SK-N-SH (cell line): ENCODE measurements at regions of chr7 and their contacts with region 1.

Region 1: GRCh38 chr7:76262683-76263402 is 39.6 kb upstream of the HSPB1 start:
- DNase-seq: peak; percentile 88
- H3K4me3 ChIP-seq: no peak overlapping the region; a peak in 1 of 4 replicates
- H3K27ac ChIP-seq: no peak overlapping the region
- H3K4me1 ChIP-seq: peaks cover 0 to 4% of the 10 kb centered on the region in 2 experiments; a peak in 1 of 4 replicates
- H3K27me3 ChIP-seq: no peaks in the 10 kb centered on the region
- CTCF ChIP-seq: peak; percentile 95
- EP300 ChIP-seq: no peak
- RAD21 ChIP-seq: peak; percentile 99

Region 2: GRCh38 chr7:76166404-76167255 is 96.2 kb before region 1 on chr7:
- CTCF ChIA-PET with region 1: interaction called, 18 read pairs
- POLR2A ChIA-PET with region 1: interaction called, 15 read pairs
- DNase-seq: peak; percentile 99
- H3K4me3 ChIP-seq: peak overlapping the region; percentile 65 to 69
- H3K27ac ChIP-seq: peak overlapping the region; percentile 59 to 70; a peak in 3 of 4 replicates
- H3K4me1 ChIP-seq: peaks cover 0 to 3% of the 10 kb centered on the region in 2 experiments; a peak in 1 of 4 replicates
- H3K27me3 ChIP-seq: no peaks in the 10 kb centered on the region
- CTCF ChIP-seq: peak; percentile 28; the same call in 1 of the 2 replicates
- EP300 ChIP-seq: no peak
- RAD21 ChIP-seq: peak; percentile 27

Region 3: DNA sequence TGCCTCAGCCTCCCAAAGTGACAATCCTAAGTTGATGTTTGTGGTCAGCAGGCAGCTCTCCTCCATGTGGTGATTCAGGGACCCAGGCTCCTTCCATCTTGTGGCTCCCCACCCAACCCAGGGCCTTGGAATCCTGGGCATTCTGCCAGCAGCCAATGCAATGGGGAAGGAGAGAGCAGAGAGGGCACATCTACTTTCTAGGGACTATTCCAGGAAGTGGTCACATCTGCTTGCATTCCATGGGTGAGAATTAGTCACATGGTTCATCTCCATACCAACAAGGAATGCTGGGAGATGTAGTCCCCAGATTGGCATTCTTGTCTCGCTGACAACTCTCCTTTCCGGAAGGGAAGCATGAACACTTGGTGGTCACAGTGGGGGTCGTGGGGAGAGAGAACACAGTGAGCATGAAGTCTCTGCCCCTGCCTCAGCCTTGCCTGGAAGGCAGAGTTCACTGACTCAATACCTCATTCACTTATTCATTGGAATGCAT is 71.0 kb before region 1 on chr7:
- CTCF ChIA-PET with region 1: interaction called, 170 read pairs
- POLR2A ChIA-PET with region 1: interaction called, 3 read pairs
- DNase-seq: peak; percentile 72
- H3K4me3 ChIP-seq: no peak overlapping the region
- H3K27ac ChIP-seq: no peak overlapping the region
- H3K4me1 ChIP-seq: no peaks in the 10 kb centered on the region
- H3K27me3 ChIP-seq: peaks cover 4% of the 10 kb centered on the region; the same call in 1 of the 2 replicates
- CTCF ChIP-seq: no peak
- EP300 ChIP-seq: no peak
- RAD21 ChIP-seq: no peak

Region 4: DNA sequence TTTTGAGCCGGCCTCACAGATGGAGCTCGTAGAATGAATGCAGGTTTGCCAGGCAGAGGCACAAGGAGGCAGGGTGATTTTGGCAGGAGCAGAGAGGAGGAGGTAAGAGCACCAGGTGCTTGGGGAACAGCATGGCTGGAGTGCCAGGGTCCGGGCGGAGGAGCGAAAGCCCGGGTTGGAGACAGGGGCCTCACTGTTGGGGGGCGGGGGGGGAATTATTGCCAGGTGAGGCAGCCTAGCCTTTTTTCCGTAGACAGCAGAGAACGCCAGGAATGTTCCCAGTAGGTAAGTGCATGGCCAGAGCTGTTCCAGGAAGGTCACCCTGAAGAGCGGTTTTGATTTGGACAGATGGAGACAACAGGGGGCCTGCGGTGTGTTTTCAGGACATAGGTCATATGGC is 51.6 kb before region 1 on chr7:
- CTCF ChIA-PET with region 1: interaction called, 170 read pairs
- POLR2A ChIA-PET with region 1: interaction called, 5 read pairs
- DNase-seq: no peak
- H3K4me3 ChIP-seq: no peak overlapping the region
- H3K27ac ChIP-seq: no peak overlapping the region
- H3K4me1 ChIP-seq: peaks cover 0 to 9% of the 10 kb centered on the region in 2 experiments; a peak in 1 of 4 replicates
- H3K27me3 ChIP-seq: peaks cover 29% of the 10 kb centered on the region
- CTCF ChIP-seq: no peak
- EP300 ChIP-seq: no peak
- RAD21 ChIP-seq: no peak

Region 5: DNA sequence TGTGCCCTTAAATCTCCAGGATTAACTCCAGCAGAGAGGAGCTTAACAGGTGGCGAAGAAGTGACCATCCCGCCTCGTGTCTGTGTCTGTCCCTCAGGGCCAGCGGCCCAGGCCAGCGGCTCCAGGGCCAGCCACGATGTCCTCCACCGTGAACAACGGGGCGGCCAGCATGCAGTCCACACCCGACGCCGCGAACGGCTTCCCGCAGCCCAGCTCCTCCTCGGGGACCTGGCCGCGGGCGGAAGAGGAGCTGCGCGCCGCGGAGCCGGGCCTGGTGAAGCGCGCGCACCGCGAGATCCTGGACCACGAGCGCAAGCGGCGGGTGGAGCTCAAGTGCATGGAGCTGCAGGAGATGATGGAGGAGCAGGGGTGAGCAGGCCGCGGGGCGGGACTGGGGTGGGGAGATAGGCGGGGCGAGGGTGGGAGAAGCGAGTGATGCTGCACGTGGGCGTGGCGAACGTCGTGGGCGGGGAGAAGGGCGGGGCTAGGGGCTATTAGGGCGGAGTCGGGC is 27.9 kb before region 1 on chr7:
- CTCF ChIA-PET with region 1: interaction called, 19 read pairs
- POLR2A ChIA-PET with region 1: no interaction called
- DNase-seq: peak; percentile 100
- H3K4me3 ChIP-seq: peak overlapping the region in 1 of 2 experiments; percentile 19; a peak in 1 of 4 replicates
- H3K27ac ChIP-seq: peak overlapping the region in 1 of 2 experiments; percentile 65; a peak in 2 of 4 replicates
- H3K4me1 ChIP-seq: peaks cover 0 to 8% of the 10 kb centered on the region in 2 experiments; a peak in 1 of 4 replicates
- H3K27me3 ChIP-seq: peaks cover 5% of the 10 kb centered on the region; the same call in 1 of the 2 replicates
- CTCF ChIP-seq: no peak
- EP300 ChIP-seq: no peak
- RAD21 ChIP-seq: no peak

Region 6: DNA sequence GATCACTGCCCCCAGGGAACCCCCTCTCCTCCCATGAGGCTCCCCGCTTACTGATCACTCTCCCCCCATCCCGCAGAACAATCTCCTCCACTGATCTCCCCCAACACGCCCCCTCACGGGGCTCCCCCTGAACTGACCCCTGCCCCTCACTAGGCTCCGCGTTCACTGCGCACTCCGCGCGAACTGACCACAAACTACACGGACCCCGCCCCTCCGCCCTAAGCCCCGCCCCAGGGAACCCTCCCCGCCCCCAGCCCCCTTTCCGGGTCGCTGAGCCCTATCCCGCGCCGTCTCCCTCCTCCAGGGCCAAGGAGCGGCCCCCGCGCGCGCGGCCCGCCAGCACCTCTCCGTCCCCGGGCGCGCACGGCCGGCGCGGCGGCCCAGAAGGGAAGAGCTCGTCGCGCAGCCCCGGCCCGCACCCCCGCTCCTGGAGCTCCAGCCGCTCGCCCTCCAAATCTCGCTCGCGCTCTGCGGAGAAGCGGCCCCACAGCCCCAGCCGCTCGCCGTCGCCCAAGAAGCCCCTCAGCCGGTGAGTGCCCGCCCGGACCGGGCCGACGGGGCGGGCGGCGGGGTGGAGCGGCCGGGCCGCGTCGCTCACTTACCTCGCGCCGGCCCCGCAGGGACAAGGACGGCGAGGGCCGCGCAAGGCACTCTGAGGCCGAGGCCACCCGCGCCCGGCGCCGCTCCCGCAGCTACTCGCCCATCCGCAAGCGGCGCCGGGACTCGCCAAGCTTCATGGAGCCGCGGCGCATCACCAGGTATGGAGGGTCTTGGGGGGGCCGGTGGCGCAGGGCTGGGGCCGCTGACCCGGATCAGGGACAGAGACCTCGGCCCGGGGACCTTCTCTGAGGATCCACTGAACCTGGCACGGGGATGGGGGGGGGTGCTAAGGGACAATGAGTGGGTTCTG is 19.8 kb after region 1 on chr7:
- CTCF ChIA-PET with region 1: interaction called, 90 read pairs
- POLR2A ChIA-PET with region 1: interaction called, 3 read pairs
- DNase-seq: peak; percentile 60
- H3K4me3 ChIP-seq: peak overlapping the region in 1 of 2 experiments; percentile 12; a peak in 1 of 4 replicates
- H3K27ac ChIP-seq: no peak overlapping the region
- H3K4me1 ChIP-seq: peaks cover 3 to 8% of the 10 kb centered on the region in 2 experiments; a peak in 2 of 4 replicates
- H3K27me3 ChIP-seq: no peaks in the 10 kb centered on the region
- CTCF ChIP-seq: no peak
- EP300 ChIP-seq: no peak
- RAD21 ChIP-seq: no peak

Region 7: DNA sequence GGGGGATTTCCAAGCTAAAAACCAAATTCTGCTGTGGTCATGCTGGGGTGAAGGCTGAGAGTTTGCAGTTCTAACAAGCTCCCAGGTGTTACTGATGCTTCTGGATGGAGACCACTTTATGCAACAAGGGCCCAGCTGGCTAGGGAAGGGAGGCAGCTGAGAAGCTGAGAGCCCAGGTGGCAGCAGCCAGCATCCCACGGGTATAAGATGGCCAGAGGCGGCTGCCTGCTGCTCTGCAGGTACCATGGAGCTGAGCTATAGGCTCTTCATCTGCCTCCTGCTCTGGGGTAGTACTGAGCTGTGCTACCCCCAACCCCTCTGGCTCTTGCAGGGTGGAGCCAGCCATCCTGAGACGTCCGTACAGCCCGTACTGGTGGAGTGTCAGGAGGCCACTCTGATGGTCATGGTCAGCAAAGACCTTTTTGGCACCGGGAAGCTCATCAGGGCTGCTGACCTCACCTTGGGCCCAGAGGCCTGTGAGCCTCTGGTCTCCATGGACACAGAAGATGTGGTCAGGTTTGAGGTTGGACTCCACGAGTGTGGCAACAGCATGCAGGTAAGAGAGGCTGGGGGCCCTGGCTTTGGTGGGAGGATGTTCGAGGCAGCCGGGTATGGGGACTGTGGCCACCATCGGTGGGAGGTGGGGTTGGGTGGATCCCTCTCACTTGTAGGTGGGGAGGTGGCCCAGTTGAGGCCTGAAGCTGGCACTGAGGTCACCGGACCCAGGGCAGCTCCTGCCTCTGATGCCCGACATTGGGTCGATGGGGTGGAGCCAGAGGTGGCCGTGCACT is 162.1 kb after region 1 on chr7 and contains the start of gene ZP3:
- CTCF ChIA-PET with region 1: no interaction called
- POLR2A ChIA-PET with region 1: no interaction called
- DNase-seq: no peak
- H3K4me3 ChIP-seq: no peak within 1 kb of the TSS
- H3K27ac ChIP-seq: no peak within 1 kb of the TSS
- H3K4me1 ChIP-seq: no peaks in the 10 kb centered on the region
- H3K27me3 ChIP-seq: no peaks in the 10 kb centered on the region
- CTCF ChIP-seq: no peak
- EP300 ChIP-seq: no peak
- RAD21 ChIP-seq: no peak
- polyA plus RNA-seq, gene ZP3: 4.5 and 5.4 TPM in 2 replicates